A673 (cell line): ENCODE measurements at regions of chr22 and their contacts with region 1.

Region 1: DNA sequence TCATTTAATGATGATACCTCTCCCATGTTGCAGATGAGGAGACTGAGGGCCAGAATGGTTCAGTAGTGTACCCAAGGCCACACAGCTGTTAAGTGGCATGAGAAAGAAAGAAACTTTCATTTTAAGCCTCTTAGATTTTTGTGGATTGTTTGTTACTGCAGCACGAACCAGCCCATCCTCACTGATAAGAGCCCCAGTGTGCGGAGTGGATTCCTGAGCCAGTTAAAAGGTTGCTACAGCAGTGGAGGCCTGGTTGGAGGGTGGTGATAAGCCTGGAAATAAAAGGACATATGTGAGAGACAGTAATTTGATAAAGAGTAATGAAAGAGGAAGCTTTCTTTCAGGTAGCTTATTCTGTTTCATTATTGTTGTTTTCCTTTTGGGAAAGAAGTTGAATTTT is 89.0 kb downstream of the ATXN10 start:
- DNase-seq: no peak
- H3K4me3 ChIP-seq: no peak overlapping the region
- H3K27ac ChIP-seq: no peak overlapping the region
- H3K4me1 ChIP-seq: no peaks in the 10 kb centered on the region
- H3K27me3 ChIP-seq: no peaks in the 10 kb centered on the region
- CTCF ChIP-seq: no peak

Region 2: GRCh38 chr22:46726066-46726985 is 965.6 kb after region 1 on chr22:
- CTCF ChIA-PET with region 1: no interaction called
- POLR2A ChIA-PET with region 1: interaction called, 10 read pairs
- intact Hi-C with region 1: no loop called
- DNase-seq: no peak
- H3K4me3 ChIP-seq: no peak overlapping the region
- H3K27ac ChIP-seq: no peak overlapping the region
- H3K4me1 ChIP-seq: peaks cover 12% of the 10 kb centered on the region
- H3K27me3 ChIP-seq: no peaks in the 10 kb centered on the region
- CTCF ChIP-seq: no peak